K562 (cell line): ENCODE measurements at regions of chr4 and their contacts with region 1.

Region 1: DNA sequence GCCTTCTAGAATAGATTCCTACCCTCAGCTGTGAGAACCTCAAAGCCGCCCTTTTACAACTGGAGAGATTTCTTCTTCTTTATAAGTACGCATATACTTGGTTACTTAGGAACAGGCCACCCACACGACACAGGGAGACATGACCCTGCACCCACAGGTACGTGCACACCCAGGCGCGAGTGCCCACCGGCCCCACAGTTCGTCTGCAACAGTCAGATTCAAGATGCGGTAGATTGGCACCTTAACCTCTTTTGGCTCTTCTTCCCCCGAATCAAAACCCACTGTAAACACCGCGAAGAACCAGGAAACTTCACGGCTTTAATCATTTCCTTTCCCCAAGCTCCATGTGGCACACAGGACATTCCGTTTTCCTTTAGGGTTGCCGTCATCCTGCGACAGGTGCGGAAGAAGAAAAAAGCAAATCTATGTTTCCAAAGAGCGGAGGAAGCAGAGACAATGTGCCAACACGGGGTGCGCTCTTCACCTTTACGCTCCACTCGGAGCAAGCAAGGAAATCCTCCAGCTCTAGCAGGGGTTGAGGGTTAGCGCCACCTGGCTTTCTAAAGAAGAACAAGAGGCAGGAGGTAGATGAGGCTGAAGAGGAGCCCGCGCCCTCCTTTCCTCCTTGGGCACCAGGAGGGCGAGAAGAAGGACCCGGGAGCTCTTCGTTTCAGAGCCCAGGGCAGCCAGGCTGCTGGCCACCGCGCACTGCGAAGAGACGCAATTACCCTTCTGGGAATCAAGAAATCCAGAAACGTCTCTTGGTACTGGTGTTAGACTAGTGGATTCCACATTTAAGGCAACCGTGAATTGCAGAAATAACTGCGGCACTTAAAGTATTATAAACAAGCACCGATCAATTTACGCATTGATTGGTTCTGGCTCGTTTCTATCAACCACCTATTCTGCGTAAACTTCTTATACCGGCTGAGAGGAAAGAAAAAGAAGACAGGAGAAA is 35.7 kb downstream of the HAND2 start:
- DNase-seq: peak; percentile 27 to 71 (median 47)
- ATAC-seq: peak; percentile 97
- H3K4me3 ChIP-seq: peak overlapping the region; percentile 10
- H3K27ac ChIP-seq: no peak overlapping the region
- H3K4me1 ChIP-seq: no peaks in the 10 kb centered on the region; a peak in 1 of 5 replicates
- H3K27me3 ChIP-seq: no peaks in the 10 kb centered on the region
- CTCF ChIP-seq: peak; percentile 80 to 94 (median 82)
- EP300 ChIP-seq: no peak
- POLR2A ChIP-seq: no peak
- RAD21 ChIP-seq: peak; percentile 58 to 77

Region 2: DNA sequence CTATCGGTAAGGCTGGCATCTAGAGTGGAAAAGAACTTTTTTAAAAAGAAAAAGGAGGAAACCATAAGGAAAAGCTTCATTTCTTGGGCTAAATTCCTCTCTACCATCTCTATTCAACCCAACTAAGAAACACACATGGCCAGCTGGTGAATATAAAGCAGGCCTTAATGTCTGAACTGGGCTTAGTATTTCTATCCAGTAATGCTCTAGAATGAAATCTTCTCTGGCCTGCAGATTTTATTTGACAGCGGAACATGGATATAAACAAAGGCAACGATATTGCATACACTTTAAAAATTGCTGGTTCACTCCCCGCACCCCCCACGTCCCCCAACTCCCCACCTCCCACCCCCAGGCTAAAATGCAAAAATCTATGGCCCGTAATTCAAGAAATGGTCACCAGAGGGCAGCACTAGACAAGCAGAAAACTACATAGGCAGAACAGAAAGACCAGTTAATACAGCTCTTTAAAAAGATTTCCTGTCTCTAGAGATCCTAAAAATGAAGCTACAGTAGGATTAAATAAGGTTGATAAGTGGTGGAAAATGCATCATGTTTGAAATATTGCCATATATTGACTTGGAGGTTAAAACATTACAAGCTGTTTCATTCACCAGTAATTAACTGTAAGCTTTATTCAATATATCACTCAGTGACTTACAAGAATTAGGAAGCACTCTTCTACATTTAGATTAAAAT is 480.9 kb before region 1 on chr4:
- CTCF ChIA-PET with region 1: no interaction called
- POLR2A ChIA-PET with region 1: no interaction called
- in situ Hi-C with region 1: no loop called
- intact Hi-C with region 1: loop called (anchors 5 kb)
- DNase-seq: peak; percentile 57 to 62 (median 62)
- ATAC-seq: peak; percentile 82
- H3K4me3 ChIP-seq: no peak overlapping the region
- H3K27ac ChIP-seq: no peak overlapping the region
- H3K4me1 ChIP-seq: peaks cover 0 to 4% of the 10 kb centered on the region in 2 experiments; a peak in 1 of 5 replicates
- H3K27me3 ChIP-seq: no peaks in the 10 kb centered on the region; a peak in 1 of 5 replicates
- CTCF ChIP-seq: peak; percentile 42 to 74 (median 64); a peak in 5 of 6 replicates
- EP300 ChIP-seq: no peak
- POLR2A ChIP-seq: no peak
- RAD21 ChIP-seq: peak; percentile 66 to 77

Region 3: DNA sequence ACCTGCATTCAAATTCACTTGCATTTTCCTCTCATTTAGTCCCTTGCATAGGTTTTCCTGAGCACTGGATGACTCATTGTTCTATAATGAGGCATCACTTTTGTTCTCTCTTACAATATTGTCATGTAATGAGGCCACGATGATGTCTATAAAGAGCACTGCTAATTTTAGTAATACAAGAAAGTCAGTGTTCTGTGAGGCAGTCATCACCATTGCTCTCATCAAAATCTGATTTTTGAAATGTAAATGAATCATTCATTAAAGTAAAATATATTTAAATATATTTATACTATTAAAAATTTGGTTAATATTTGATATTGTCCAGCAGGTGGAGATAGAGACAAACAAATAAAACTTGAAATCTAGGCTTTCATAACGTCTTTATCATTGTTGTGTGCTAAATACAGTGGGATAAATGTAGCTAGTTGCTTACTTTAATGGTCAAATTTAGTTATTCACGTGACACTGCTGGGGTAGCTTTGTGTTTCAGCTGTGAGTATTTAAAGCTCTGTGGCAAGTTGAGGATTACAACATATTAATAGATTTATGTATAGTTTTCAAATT is 175.6 kb before region 1 on chr4:
- CTCF ChIA-PET with region 1: interaction called, 4 read pairs
- POLR2A ChIA-PET with region 1: no interaction called
- in situ Hi-C with region 1: no loop called
- intact Hi-C with region 1: loop called (anchors 2 kb)
- DNase-seq: peak in 1 of 4 experiments; percentile 17
- ATAC-seq: no peak
- H3K4me3 ChIP-seq: no peak overlapping the region
- H3K27ac ChIP-seq: no peak overlapping the region
- H3K4me1 ChIP-seq: no peaks in the 10 kb centered on the region; a peak in 1 of 5 replicates
- H3K27me3 ChIP-seq: no peaks in the 10 kb centered on the region
- CTCF ChIP-seq: peak in 2 of 3 experiments; percentile 12 to 46; a peak in 3 of 6 replicates
- EP300 ChIP-seq: no peak
- POLR2A ChIP-seq: no peak
- RAD21 ChIP-seq: peak; percentile 46 to 63; a peak in 3 of 4 replicates

Region 4: GRCh38 chr4:173573286-173573685 is 79.0 kb after region 1 on chr4:
- CTCF ChIA-PET with region 1: no interaction called
- POLR2A ChIA-PET with region 1: no interaction called
- in situ Hi-C with region 1: no loop called
- intact Hi-C with region 1: no loop called
- DNase-seq: no peak
- ATAC-seq: peak; percentile 62
- H3K4me3 ChIP-seq: no peak overlapping the region
- H3K27ac ChIP-seq: no peak overlapping the region
- H3K4me1 ChIP-seq: no peaks in the 10 kb centered on the region
- H3K27me3 ChIP-seq: no peaks in the 10 kb centered on the region
- CTCF ChIP-seq: no peak
- EP300 ChIP-seq: no peak
- POLR2A ChIP-seq: no peak
- RAD21 ChIP-seq: no peak